IMR-90 (cell line): ENCODE measurements at regions of chrX and their contacts with region 1.

Region 1: DNA sequence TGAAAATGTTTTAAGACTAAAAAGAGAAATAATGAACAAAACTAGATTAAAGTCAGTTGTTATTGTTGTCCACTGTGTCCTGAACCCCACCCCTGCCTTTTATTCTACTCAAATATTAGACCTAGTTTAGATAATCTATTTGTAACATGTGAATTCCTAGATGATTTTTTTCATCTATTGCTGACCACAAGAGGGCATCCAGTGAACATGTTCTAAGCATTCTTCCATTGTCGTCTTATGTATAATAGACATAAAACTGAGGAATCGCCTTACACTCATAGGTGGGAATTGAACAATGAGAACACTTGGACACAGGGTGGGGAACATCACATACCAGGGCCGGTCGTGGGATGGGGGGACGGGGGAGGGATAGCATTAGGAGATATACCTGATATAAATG is 36.4 kb upstream of the HPRT1 start:
- DNase-seq: peak; percentile 47
- ATAC-seq: peak; percentile 71
- H3K4me3 ChIP-seq: no peak overlapping the region
- H3K27ac ChIP-seq: no peak overlapping the region
- H3K4me1 ChIP-seq: no peaks in the 10 kb centered on the region
- H3K27me3 ChIP-seq: no peaks in the 10 kb centered on the region
- CTCF ChIP-seq: peak; percentile 50
- POLR2A ChIP-seq: no peak
- RAD21 ChIP-seq: peak; percentile 48

Region 2: DNA sequence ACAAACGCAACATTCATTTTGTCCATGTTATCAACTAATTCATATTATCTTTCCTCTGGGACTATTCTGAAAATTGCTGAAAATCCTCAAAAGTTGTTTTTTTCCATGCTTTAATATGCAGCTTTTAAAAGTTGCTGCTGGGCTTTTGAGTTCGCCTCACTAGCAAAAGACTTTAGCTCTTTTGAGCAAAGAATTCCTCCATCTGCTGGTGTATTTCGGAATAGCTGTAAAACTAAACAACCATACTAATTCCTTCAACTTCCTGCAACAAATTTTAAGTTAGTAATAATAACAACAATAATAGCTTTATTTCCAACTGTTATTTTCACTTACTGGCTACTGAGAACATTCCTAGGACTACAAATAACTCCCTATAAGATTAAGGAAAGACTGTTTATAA is 359.2 kb after region 1 on chrX:
- CTCF ChIA-PET with region 1: no interaction called
- POLR2A ChIA-PET with region 1: no interaction called
- dilution Hi-C with region 1: no loop called
- in situ Hi-C with region 1: no loop called
- intact Hi-C with region 1: loop called (anchors 2 kb)
- DNase-seq: peak; percentile 59
- ATAC-seq: 0 out of 2 replicates have a peak, but pooled peaks have one; percentile 37
- H3K4me3 ChIP-seq: no peak overlapping the region
- H3K27ac ChIP-seq: no peak overlapping the region
- H3K4me1 ChIP-seq: no peaks in the 10 kb centered on the region
- H3K27me3 ChIP-seq: no peaks in the 10 kb centered on the region
- CTCF ChIP-seq: peak; percentile 70
- POLR2A ChIP-seq: no peak
- RAD21 ChIP-seq: peak; percentile 72